Cardiac septum (tissue), 1 donor: ENCODE measurements at regions of chr1 and their contacts with region 1.

Region 1: DNA sequence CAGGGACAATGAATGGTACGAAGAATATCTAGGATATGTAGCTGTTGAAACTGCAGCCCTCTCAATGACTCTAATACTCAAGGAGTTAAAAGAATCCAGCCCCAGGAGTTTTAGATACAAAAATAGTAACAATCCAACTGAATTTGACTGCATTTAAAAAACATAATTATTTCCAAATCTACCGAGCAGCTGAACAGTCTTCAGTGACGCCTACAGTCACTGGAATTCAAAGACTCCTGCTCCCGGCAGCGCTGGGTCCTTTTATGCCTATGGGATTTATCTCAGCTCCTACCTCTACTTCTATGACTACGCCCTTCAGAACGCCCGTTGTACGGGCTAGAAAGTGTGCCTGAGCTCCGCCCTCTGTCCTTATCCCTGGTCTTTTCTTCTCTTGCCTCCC is 55.7 kb downstream of the WARS2 start:
- DNase-seq: no peak

Region 2: GRCh38 chr1:119116725-119117124 is 31.9 kb after region 1 on chr1:
- intact Hi-C with region 1: no loop called
- DNase-seq: no peak

Region 3: GRCh38 chr1:119140177-119141019 is 55.6 kb after region 1 on chr1 and contains the start of gene WARS2:
- intact Hi-C with region 1: loop called (anchors 5 kb)
- DNase-seq: peak; percentile 98
- total RNA-seq, gene WARS2: 10.7 TPM